ENCODE measurements at regions of chr1 and their contacts with region 1.

Region 1: DNA sequence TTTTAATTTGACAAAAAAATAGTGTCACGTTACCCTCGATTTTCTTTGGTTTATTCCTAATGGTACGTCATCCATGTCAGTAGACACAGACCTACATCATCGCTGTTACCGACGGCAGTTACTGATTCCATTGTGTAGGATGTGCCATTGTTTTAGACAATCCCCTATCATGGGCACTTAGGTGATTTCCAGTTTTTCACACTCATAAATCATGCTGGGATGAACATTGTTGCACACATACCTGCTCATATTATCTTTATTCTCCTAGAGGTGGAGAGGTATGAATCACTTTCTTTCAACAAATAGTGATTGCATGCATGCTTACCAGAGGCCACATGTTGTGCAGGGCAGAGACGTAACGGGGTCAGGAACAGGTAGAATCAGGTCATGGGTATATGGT is 79.7 kb upstream of the EFHD2 start:
- DNase-seq: no peak

Region 2: GRCh38 chr1:15406609-15407559 is 76.9 kb after region 1 on chr1:
- intact Hi-C with region 1: loop called in 1 of 2 experiments (anchors 1 kb)
- DNase-seq: no peak